ENCODE measurements at regions of chr2 and their contacts with region 1.

Region 1: DNA sequence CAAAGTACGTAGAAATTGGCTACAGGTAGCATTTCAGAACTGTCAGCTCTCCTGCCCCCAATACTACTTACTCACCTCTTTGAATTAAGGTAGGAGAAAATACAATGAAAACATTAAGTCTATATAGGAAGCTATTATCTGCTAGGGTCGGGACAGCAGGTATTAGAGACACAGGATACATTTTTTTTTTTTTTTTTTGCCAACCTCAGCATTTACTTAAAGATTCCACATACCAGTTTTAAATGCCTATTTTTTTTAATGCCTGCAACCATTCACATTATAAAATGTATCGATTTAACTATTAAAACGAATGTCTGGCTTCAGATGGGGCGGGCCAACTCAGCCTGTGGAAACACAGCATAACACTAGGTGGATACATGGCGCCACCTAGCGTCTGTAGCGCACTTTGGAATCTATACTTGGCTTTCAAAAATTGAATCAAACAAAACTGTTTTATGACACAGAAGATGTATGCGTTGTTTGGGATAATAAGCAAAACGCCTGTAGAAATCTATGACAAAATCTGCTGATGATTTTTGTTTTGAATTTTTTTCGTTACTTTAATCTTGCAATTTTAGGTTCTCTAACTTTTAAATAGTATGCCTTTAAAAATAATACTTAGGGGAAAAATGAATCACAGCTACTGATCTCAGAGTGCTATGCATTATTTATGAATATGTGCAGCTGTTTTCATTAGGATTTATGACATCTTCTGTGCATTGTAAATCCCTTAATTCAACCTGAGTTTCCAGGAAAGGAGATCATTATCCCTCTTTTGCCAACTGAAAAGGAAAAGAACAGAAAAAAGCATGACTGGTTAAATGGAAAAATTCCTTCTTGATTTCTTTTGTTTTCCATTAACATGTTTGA is 261.0 kb downstream of the NYAP2 start:
- DNase-seq: peak; percentile 89
- H3K4me3 ChIP-seq: no peak overlapping the region
- H3K27ac ChIP-seq: no peak overlapping the region
- H3K4me1 ChIP-seq: peaks cover 0 to 4% (median 0%) of the 10 kb centered on the region in 6 donors
- H3K27me3 ChIP-seq: peaks cover 0 to 10% (median 0%) of the 10 kb centered on the region in 7 donors
- CTCF ChIP-seq: peak; percentile 37 to 80 (median 73)
- POLR2A ChIP-seq: no peak

Region 2: GRCh38 chr2:225122583-225123486 is 537.7 kb before region 1 on chr2:
- intact Hi-C with region 1: loop called (anchors 5 kb)
- DNase-seq: no peak
- H3K4me3 ChIP-seq: no peak overlapping the region
- H3K27ac ChIP-seq: no peak overlapping the region
- H3K4me1 ChIP-seq: no peaks in the 10 kb centered on the region
- H3K27me3 ChIP-seq: no peaks in the 10 kb centered on the region
- CTCF ChIP-seq: peak in 8 of 11 experiments; percentile 16 to 55 (median 50)
- POLR2A ChIP-seq: no peak

Region 3: GRCh38 chr2:225282858-225283710 is 377.4 kb before region 1 on chr2:
- intact Hi-C with region 1: loop called (anchors 5 kb)
- DNase-seq: no peak
- H3K4me3 ChIP-seq: no peak overlapping the region
- H3K27ac ChIP-seq: no peak overlapping the region
- H3K4me1 ChIP-seq: no peaks in the 10 kb centered on the region
- H3K27me3 ChIP-seq: no peaks in the 10 kb centered on the region
- CTCF ChIP-seq: peak in 10 of 11 experiments; percentile 19 to 72 (median 56)
- POLR2A ChIP-seq: no peak

Region 4: GRCh38 chr2:226800941-226801784 is 1140.7 kb after region 1 on chr2:
- intact Hi-C with region 1: loop called (anchors 10 kb)
- DNase-seq: peak; percentile 92
- H3K4me3 ChIP-seq: peak overlapping the region; percentile 2 to 86 (median 45)
- H3K27ac ChIP-seq: peak overlapping the region in 6 of 8 donors; percentile 77 to 88 (median 83)
- H3K4me1 ChIP-seq: peaks cover 10 to 64% (median 43%) of the 10 kb centered on the region in 6 donors
- H3K27me3 ChIP-seq: peaks cover 0 to 78% (median 23%) of the 10 kb centered on the region in 7 donors
- CTCF ChIP-seq: peak in 1 of 11 experiments; percentile 12
- POLR2A ChIP-seq: no peak